HepG2 (cell line): ENCODE measurements at regions of chr14 and their contacts with region 1.

Region 1: DNA sequence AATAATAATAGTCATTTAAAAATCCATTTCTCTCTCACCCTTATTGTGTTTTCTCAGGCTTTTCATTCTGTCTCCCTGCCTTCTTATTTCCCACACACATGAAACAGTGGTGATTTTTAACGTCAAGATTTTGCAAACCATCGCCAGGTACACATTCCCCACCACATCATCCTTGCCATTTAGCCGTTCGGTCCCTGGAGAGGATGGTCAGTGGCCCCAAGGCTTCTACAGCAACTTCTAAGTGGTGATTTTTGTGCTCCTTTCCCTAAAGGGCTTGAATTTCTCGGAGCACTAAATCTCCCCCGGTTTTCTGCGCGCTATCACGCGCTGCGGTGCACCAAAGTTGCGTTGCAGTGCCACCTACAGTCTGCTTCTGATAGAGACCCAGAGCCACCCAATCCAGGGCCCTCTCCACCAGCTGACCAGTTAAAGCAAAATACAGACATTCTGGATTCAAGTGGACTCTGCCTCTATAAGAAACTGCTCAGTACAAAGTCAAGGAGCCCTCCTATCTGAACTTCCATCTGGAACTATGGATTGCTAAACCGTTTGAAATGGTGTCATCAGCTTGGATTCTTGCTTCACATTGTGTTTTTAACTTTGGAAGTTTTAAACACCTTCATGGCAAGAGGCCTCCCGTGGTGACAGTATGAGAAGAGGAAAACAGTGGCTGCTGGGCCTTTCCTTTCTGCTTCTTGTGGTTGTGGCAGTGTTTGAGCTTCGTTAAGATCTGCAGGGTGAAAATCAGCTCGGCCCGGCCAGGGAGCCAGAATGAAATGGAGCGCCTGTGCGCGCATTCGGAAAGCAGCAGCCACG is 234.0 kb downstream of the SPTSSA start:
- DNase-seq: peak; percentile 72
- ATAC-seq: peak; percentile 99
- H3K4me3 ChIP-seq: no peak overlapping the region
- H3K27ac ChIP-seq: no peak overlapping the region
- H3K4me1 ChIP-seq: peaks cover 8% of the 10 kb centered on the region; the same call in 1 of the 2 replicates
- H3K27me3 ChIP-seq: peaks cover 0 to 5% of the 10 kb centered on the region in 2 experiments; a peak in 1 of 5 replicates
- CTCF ChIP-seq: peak; percentile 98
- EP300 ChIP-seq: no peak
- POLR2A ChIP-seq: no peak
- RAD21 ChIP-seq: peak; percentile 97

Region 2: GRCh38 chr14:32710731-32711680 is 1517.0 kb before region 1 on chr14:
- CTCF ChIA-PET with region 1: interaction called, 4 read pairs
- POLR2A ChIA-PET with region 1: no interaction called
- in situ Hi-C with region 1: no loop called
- intact Hi-C with region 1: loop called (anchors 5 kb)
- DNase-seq: peak; percentile 62
- ATAC-seq: peak; percentile 94
- H3K4me3 ChIP-seq: no peak overlapping the region
- H3K27ac ChIP-seq: no peak overlapping the region
- H3K4me1 ChIP-seq: no peaks in the 10 kb centered on the region
- H3K27me3 ChIP-seq: no peaks in the 10 kb centered on the region
- CTCF ChIP-seq: peak; percentile 79
- EP300 ChIP-seq: no peak
- POLR2A ChIP-seq: no peak
- RAD21 ChIP-seq: no peak

Region 3: DNA sequence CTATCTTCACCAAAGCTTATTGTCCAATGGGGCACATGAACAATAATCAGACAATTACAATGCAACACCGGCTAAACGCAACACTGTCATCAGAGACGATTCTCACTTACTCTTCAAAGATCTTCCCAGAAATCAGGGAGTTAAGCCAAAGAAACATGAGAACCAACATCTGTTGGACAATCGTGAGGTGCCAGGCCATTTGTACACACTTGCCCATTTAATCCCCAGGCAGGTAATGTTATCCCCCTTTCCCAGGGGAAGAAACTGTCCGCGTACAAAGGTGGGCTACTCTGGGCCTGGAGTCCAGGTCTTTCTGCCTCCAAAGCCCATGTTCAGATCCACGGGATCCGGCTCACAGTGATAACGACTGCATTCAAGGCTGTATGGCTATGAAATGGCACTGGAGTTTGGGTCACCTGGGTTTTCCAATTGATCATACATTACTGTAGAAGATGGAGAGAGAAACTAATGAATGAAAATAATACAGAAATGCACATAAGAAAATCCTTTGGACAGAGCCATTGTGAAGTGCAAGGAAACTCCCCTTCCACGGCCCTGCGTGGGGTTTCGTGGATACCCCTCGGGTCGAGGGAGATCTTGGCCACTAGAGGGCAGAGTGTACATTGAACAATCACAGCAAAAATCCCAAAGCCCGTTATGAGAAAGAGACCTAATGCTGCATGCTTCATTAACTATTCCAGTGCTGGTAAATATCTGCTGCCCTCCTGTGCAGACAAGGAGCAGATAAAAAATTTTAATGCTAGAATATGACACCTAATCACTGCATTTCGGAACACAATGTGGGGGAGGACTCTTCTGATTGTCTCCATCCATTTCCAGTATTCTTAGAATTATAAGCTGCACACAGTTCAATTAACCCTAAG is 388.6 kb before region 1 on chr14:
- CTCF ChIA-PET with region 1: interaction called, 63 read pairs
- POLR2A ChIA-PET with region 1: no interaction called
- in situ Hi-C with region 1: loop called (anchors 5 kb)
- intact Hi-C with region 1: loop called (anchors 1 kb)
- DNase-seq: peak; percentile 58
- ATAC-seq: peak; percentile 85
- H3K4me3 ChIP-seq: no peak overlapping the region
- H3K27ac ChIP-seq: no peak overlapping the region
- H3K4me1 ChIP-seq: no peaks in the 10 kb centered on the region
- H3K27me3 ChIP-seq: peaks cover 5 to 26% of the 10 kb centered on the region in 2 experiments; a peak in 3 of 5 replicates
- CTCF ChIP-seq: peak; percentile 96
- EP300 ChIP-seq: no peak
- POLR2A ChIP-seq: no peak
- RAD21 ChIP-seq: peak; percentile 87

Region 4: GRCh38 chr14:33959692-33960151 is 268.3 kb before region 1 on chr14:
- CTCF ChIA-PET with region 1: no interaction called
- POLR2A ChIA-PET with region 1: no interaction called
- in situ Hi-C with region 1: no loop called
- intact Hi-C with region 1: loop called (anchors 5 kb)
- DNase-seq: no peak
- ATAC-seq: no peak
- H3K4me3 ChIP-seq: no peak overlapping the region
- H3K27ac ChIP-seq: no peak overlapping the region
- H3K4me1 ChIP-seq: no peaks in the 10 kb centered on the region
- H3K27me3 ChIP-seq: peaks cover 2 to 16% of the 10 kb centered on the region in 2 experiments; a peak in 3 of 5 replicates
- CTCF ChIP-seq: no peak
- EP300 ChIP-seq: no peak
- POLR2A ChIP-seq: no peak
- RAD21 ChIP-seq: no peak

Region 5: GRCh38 chr14:34136996-34137745 is 90.9 kb before region 1 on chr14:
- CTCF ChIA-PET with region 1: no interaction called
- POLR2A ChIA-PET with region 1: no interaction called
- in situ Hi-C with region 1: loop called (anchors 5 kb)
- intact Hi-C with region 1: loop called (anchors 2 kb)
- DNase-seq: no peak
- ATAC-seq: no peak
- H3K4me3 ChIP-seq: no peak overlapping the region
- H3K27ac ChIP-seq: no peak overlapping the region
- H3K4me1 ChIP-seq: peaks cover 33% of the 10 kb centered on the region
- H3K27me3 ChIP-seq: peaks cover 0 to 8% of the 10 kb centered on the region in 2 experiments; a peak in 3 of 5 replicates
- CTCF ChIP-seq: no peak
- EP300 ChIP-seq: no peak
- POLR2A ChIP-seq: no peak
- RAD21 ChIP-seq: no peak

Region 6: GRCh38 chr14:34180460-34180868 is 47.6 kb before region 1 on chr14:
- CTCF ChIA-PET with region 1: no interaction called
- POLR2A ChIA-PET with region 1: no interaction called
- in situ Hi-C with region 1: no loop called
- intact Hi-C with region 1: no loop called
- DNase-seq: peak; percentile 31
- ATAC-seq: peak; percentile 83
- H3K4me3 ChIP-seq: no peak overlapping the region
- H3K27ac ChIP-seq: no peak overlapping the region
- H3K4me1 ChIP-seq: peaks cover 20% of the 10 kb centered on the region
- H3K27me3 ChIP-seq: no peaks in the 10 kb centered on the region
- CTCF ChIP-seq: no peak
- EP300 ChIP-seq: no peak
- POLR2A ChIP-seq: no peak
- RAD21 ChIP-seq: no peak

Region 7: GRCh38 chr14:34199564-34199963 is 28.5 kb before region 1 on chr14:
- CTCF ChIA-PET with region 1: no interaction called
- POLR2A ChIA-PET with region 1: no interaction called
- in situ Hi-C with region 1: no loop called
- intact Hi-C with region 1: no loop called
- DNase-seq: no peak
- ATAC-seq: no peak
- H3K4me3 ChIP-seq: no peak overlapping the region
- H3K27ac ChIP-seq: no peak overlapping the region
- H3K4me1 ChIP-seq: no peaks in the 10 kb centered on the region
- H3K27me3 ChIP-seq: peaks cover 0 to 3% of the 10 kb centered on the region in 2 experiments; a peak in 1 of 5 replicates
- CTCF ChIP-seq: no peak
- EP300 ChIP-seq: no peak
- POLR2A ChIP-seq: no peak
- RAD21 ChIP-seq: no peak